ENCODE measurements at regions of chr5 and their contacts with region 1.

Region 1: DNA sequence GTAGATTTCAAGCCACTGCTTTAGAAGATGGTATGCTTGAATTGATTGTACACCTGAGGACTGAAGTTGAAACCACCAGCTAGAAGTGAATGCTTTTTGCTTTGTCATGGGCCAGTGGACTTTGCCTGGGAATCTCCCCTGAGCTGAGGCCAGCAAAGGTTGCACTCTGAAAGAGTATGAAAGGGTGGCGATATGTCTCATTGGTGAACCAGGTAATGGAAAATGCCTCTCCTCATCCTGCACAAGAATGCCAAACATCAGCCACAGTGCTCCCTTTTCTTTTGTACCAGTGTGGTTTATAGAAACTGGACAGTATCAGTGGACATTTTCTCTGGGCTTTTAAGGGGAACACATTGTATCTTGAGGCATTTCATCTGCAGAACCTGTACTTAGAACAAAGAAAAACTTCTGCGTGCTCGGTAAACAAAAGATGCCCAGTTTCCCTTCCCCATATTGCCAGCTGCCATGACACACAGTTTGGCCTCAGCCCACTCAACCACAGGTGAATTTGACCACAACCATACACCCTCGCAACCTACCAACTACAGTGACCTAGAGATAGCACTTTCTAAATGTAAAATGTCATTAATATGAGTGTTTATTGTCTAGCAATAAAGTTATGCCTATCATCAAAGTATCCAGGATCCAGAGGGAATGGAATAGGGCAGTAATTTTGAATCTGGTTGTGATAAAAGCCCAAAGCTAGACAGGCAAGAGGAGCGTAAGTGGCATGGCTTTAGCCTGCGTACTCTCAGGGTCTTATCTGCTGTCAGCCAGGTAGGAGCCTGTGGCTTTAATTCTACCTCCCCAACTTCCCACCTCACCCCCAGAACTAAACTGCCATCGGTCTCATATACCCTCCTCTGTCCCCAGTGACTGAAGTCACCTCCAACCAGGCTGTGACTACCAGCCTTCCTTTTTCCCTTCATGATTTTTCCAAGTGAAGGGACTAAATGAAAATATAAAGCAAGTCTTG is 79.5 kb upstream of the LHFPL2 start:
- DNase-seq: no peak
- ATAC-seq: peak; percentile 87
- H3K4me3 Mint-ChIP-seq: peak overlapping the region; percentile 62
- H3K27ac Mint-ChIP-seq: peak overlapping the region; percentile 87
- H3K4me1 Mint-ChIP-seq: peaks cover 78% of the 10 kb centered on the region
- H3K27me3 Mint-ChIP-seq: no peaks in the 10 kb centered on the region
- CTCF ChIP-seq: no peak

Region 2: GRCh38 chr5:78574731-78575161 is 153.3 kb before region 1 on chr5:
- CTCF ChIA-PET with region 1: no interaction called
- POLR2A ChIA-PET with region 1: no interaction called
- intact Hi-C with region 1: loop called (anchors 1 kb)
- DNase-seq: no peak
- ATAC-seq: peak; percentile 63
- H3K4me3 Mint-ChIP-seq: no peak overlapping the region
- H3K27ac Mint-ChIP-seq: peak overlapping the region; percentile 82
- H3K4me1 Mint-ChIP-seq: peaks cover 27% of the 10 kb centered on the region
- H3K27me3 Mint-ChIP-seq: no peaks in the 10 kb centered on the region
- CTCF ChIP-seq: no peak

Region 3: DNA sequence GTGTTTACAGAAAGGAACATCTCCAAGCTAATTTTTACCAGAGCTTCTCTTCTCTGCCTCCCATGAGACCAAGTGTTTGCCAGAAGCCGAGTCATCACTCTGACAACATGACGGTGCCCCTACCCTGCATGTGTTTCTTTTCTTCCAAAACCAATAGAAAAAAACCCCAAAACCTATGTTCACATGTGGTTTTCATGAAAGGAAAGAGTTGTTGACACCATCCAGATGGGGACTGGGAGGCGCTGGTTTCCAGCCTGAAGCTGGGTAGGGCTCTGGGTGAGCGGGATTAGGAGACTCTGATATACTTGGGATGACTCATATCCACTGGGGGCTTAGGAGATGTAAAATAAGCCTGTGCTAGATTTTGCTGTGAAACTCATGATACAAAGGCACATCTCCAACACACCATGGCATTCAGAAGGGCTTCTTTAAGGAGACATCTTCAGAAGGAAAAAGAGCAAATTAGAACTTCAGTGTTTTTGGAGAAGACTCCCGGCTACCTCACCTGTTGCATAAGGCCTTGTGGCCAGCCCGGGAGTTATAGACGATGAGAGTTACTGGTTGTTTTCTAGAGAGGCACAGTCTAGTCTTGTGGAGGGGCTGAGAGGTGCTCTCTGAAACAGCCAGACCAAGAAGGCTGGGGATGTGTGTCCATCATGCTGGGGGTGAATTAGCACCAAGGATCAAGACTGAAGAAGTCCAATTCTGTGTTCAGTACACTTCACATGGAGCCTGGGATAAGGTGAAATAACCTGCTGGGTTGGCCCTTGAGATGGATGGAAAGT is 29.4 kb after region 1 on chr5:
- CTCF ChIA-PET with region 1: interaction called, 4 read pairs
- POLR2A ChIA-PET with region 1: interaction called, 40 read pairs
- intact Hi-C with region 1: loop called (anchors 1 kb)
- DNase-seq: no peak
- ATAC-seq: peak; percentile 38
- H3K4me3 Mint-ChIP-seq: peak overlapping the region; percentile 64
- H3K27ac Mint-ChIP-seq: peak overlapping the region; percentile 95
- H3K4me1 Mint-ChIP-seq: peaks cover 78% of the 10 kb centered on the region
- H3K27me3 Mint-ChIP-seq: no peaks in the 10 kb centered on the region
- CTCF ChIP-seq: no peak

Region 4: DNA sequence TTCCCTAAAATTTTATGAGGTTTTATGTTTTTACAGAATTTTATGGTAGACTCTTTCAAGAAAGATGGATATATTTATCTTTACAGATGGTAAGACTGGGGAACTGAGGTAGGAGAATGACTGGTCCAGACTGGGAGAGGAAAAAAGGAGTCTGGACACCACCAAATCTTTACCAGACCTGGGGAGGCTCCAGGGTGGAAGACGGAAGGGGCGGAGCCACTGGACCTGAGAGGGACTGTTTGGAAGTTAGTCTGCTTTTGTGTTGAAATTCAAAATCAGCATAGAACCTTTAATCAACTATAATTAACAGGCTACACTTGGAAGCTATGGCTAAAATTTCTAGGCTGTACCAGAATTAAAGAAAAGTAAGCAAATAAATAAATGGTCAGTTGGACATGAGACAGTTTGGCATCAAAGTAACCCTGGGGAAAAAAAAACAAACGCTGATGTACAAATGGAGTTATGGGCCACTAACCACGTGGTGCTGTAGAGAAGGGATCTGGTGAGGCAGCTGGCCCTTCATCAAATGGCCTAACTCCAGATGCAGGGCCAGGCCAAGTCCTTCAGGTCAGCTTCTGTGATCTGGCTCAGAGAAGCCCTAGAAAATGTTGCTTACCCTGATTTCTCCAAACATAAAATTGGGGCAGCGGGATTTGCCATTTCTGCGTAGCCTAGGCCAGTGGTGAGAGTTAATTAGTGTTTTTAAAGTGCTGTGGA is 101.9 kb after region 1 on chr5:
- CTCF ChIA-PET with region 1: no interaction called
- POLR2A ChIA-PET with region 1: interaction called, 6 read pairs
- intact Hi-C with region 1: loop called (anchors 5 kb)
- DNase-seq: no peak
- ATAC-seq: no peak
- H3K4me3 Mint-ChIP-seq: no peak overlapping the region
- H3K27ac Mint-ChIP-seq: no peak overlapping the region
- H3K4me1 Mint-ChIP-seq: peaks cover 37% of the 10 kb centered on the region
- H3K27me3 Mint-ChIP-seq: no peaks in the 10 kb centered on the region
- CTCF ChIP-seq: no peak

Region 5: DNA sequence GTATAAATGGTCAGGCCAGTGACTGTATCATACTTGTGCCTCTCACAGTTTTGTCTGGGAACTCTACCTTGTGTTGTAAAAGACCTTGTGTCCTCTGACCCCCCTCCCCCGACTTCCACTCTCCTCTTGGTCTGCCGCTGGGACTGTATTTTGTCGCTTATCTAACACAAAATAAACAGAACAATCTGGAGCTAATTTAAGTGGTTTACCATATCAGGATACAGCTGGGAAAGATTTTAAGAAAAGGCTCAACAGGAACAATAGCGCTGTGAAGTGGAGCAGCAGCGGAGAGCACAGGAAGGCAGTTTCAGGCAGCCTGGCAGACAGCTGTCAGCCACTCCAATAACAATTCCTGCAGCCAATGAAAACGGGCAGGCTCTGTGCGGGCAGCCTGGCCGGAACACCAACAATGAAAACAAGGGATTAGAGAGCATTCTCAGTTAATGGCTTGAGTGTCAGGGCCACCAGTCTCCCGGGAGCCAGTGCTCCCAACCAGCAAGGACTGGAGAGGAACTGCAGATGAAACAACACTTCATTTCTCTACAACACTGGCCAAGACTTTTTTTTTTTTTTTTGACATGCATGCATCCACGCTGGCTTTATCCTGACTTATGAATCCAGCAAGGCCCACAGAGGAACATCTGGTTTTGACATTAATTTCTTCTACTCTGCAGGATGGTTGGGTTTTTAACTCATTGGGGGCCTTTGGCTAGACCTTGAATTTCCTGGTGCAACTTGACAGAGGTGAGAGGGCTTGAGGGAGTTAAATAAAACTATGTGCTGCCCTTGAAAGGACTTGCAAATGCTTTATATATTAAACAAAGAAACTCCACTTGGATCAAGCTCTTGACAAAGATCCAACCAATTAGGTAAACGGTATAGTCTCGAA is 180.3 kb after region 1 on chr5:
- CTCF ChIA-PET with region 1: no interaction called
- POLR2A ChIA-PET with region 1: interaction called, 5 read pairs
- intact Hi-C with region 1: loop called (anchors 5 kb)
- DNase-seq: no peak
- ATAC-seq: no peak
- H3K4me3 Mint-ChIP-seq: peak overlapping the region; percentile 70
- H3K27ac Mint-ChIP-seq: peak overlapping the region; percentile 59
- H3K4me1 Mint-ChIP-seq: peaks cover 67% of the 10 kb centered on the region
- H3K27me3 Mint-ChIP-seq: no peaks in the 10 kb centered on the region
- CTCF ChIP-seq: no peak

Region 6: GRCh38 chr5:79474367-79475151 is 746.5 kb after region 1 on chr5:
- CTCF ChIA-PET with region 1: no interaction called
- POLR2A ChIA-PET with region 1: no interaction called
- intact Hi-C with region 1: no loop called
- DNase-seq: no peak
- ATAC-seq: no peak
- H3K4me3 Mint-ChIP-seq: no peak overlapping the region
- H3K27ac Mint-ChIP-seq: no peak overlapping the region
- H3K4me1 Mint-ChIP-seq: no peaks in the 10 kb centered on the region
- H3K27me3 Mint-ChIP-seq: peaks cover 2% of the 10 kb centered on the region
- CTCF ChIP-seq: no peak

Measured in activated B cell treated with CpG ODN at 0.5 μM for 24 hours (primary cell).